T-cell (primary cell): ENCODE measurements at regions of chr2 and their contacts with region 1.

Region 1: GRCh38 chr2:207448006-207448405 is 81.8 kb upstream of the CREB1 start:
- DNase-seq: no peak
- ATAC-seq: no peak
- H3K4me3 ChIP-seq: no peak overlapping the region
- H3K4me3 Mint-ChIP-seq: no peak overlapping the region
- H3K27ac ChIP-seq: no peak overlapping the region
- H3K27ac Mint-ChIP-seq: no peak overlapping the region
- H3K4me1 ChIP-seq: no peaks in the 10 kb centered on the region
- H3K4me1 Mint-ChIP-seq: no peaks in the 10 kb centered on the region
- H3K27me3 ChIP-seq: no peaks in the 10 kb centered on the region
- H3K27me3 Mint-ChIP-seq: peaks cover 0 to 1% of the 10 kb centered on the region in 2 donors

Region 2: DNA sequence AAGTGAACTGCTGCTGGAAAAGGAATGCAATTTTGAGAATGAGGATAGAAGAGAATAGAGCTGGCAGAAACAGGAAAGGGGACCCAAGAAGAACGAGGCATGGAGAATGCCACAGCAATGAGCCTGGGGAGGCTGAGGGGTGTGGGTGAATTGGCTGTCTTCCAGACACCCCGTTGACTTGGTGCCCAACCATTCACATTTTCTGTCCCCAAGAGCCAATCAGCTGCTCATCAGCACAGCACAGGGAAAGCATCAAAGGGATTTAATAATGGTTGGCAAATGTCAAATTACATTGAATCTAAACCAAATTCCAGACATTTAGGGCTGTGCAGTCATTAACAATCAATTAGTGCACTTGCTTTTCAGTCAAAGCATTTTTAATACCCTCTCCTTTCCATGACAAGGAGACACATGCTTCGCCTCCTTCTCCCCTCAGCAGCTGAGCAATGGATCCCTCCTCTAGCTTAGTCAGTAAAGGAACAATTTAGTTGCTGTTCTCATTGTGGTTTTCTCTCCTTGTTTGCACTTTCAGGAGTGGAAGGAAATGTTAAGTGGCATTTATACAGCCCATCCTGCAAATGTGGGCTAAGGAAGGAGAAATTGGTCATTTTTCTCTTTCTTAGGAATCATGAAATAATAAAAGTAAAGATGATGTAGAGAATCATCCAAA is 381.1 kb before region 1 on chr2:
- CTCF ChIA-PET with region 1: interaction called in 1 of 2 experiments, 10 read pairs
- POLR2A ChIA-PET with region 1: no interaction called
- DNase-seq: no peak
- ATAC-seq: no peak
- H3K4me3 ChIP-seq: no peak overlapping the region
- H3K4me3 Mint-ChIP-seq: no peak overlapping the region
- H3K27ac ChIP-seq: no peak overlapping the region
- H3K27ac Mint-ChIP-seq: no peak overlapping the region
- H3K4me1 ChIP-seq: no peaks in the 10 kb centered on the region
- H3K4me1 Mint-ChIP-seq: peaks cover 0 to 5% (median 0%) of the 10 kb centered on the region in 3 donors
- H3K27me3 ChIP-seq: no peaks in the 10 kb centered on the region
- H3K27me3 Mint-ChIP-seq: peaks cover 5 to 7% of the 10 kb centered on the region in 2 donors

Region 3: GRCh38 chr2:207499114-207499513 is 51.1 kb after region 1 on chr2:
- CTCF ChIA-PET with region 1: no interaction called
- POLR2A ChIA-PET with region 1: no interaction called
- DNase-seq: no peak
- ATAC-seq: no peak
- H3K4me3 ChIP-seq: no peak overlapping the region
- H3K4me3 Mint-ChIP-seq: no peak overlapping the region
- H3K27ac ChIP-seq: no peak overlapping the region
- H3K27ac Mint-ChIP-seq: no peak overlapping the region
- H3K4me1 ChIP-seq: peaks cover 0 to 4% of the 10 kb centered on the region in 2 experiments
- H3K4me1 Mint-ChIP-seq: peaks cover 6 to 31% (median 26%) of the 10 kb centered on the region in 3 donors
- H3K27me3 ChIP-seq: no peaks in the 10 kb centered on the region
- H3K27me3 Mint-ChIP-seq: no peaks in the 10 kb centered on the region